ENCODE measurements at regions of chr3 and their contacts with region 1.

Region 1: GRCh38 chr3:169744366-169745054 is 20.4 kb downstream of the TERC start:
- DNase-seq: no peak
- ATAC-seq: peak in 2 of 8 donors; percentile 39 to 52
- H3K4me3 ChIP-seq: no peak overlapping the region
- H3K27ac ChIP-seq: no peak overlapping the region
- H3K4me1 ChIP-seq: peaks cover 0 to 3% (median 0%) of the 10 kb centered on the region in 9 donors
- H3K27me3 ChIP-seq: peaks cover 0 to 26% (median 5%) of the 10 kb centered on the region in 7 donors
- CTCF ChIP-seq: peak; percentile 12 to 72 (median 52)

Region 2: GRCh38 chr3:168952551-168952950 is 792.0 kb before region 1 on chr3:
- intact Hi-C with region 1: loop called in 2 of 10 experiments (anchors 10 kb)
- DNase-seq: no peak
- ATAC-seq: no peak
- H3K4me3 ChIP-seq: no peak overlapping the region
- H3K27ac ChIP-seq: no peak overlapping the region
- H3K4me1 ChIP-seq: no peaks in the 10 kb centered on the region
- H3K27me3 ChIP-seq: no peaks in the 10 kb centered on the region
- CTCF ChIP-seq: peak in 6 of 9 donors; percentile 20 to 45 (median 30)

Region 3: DNA sequence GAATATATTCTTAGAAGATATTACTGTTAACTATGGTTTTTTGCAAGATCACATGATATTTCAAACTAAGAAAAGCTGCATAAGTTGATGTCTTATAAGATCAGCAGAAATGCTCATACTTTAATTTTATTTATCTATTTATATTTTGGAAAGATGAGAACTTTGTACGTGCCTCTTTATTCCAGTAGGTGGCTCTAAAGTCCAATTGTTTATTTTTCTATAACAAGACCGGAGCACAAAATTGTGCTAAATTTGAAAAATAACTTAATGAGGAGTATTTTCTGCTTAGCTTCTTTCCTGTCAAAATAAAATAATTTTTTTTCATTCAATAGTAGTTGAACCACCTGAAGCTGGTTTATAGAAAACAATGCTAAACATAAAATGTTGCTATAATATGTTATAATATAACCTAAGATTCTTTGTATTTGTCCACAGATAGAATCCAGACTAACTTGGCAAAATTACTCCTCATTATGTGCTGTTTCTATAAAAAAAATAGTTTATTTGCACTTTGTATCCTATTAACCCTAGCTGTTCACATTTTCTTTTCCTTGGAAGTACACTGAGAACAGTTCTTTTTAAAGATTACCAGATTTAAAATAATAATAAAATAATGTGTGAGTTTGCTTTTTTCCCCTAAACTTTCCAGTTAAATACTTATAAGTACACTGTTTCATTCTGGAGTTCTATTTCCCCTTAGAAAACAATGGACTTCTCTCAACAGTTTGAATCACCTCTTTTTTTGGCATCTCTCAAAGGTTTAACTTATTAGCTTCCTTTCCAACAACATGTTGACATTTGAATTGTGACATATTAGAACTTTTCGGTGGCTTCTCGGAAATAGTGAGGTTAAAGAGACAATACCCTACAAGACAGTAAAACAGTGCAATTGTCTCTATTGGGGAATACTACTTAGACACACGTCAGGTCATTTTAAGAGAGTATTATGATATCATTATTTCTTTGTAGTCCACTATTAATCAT is 611.0 kb before region 1 on chr3:
- intact Hi-C with region 1: loop called in 4 of 10 experiments (anchors 5 to 10 kb)
- DNase-seq: no peak
- ATAC-seq: peak in 7 of 8 donors; percentile 33 to 83 (median 74)
- H3K4me3 ChIP-seq: peak overlapping the region in 2 of 10 donors; percentile 9 to 22
- H3K27ac ChIP-seq: peak overlapping the region in 7 of 10 donors; percentile 32 to 93 (median 59)
- H3K4me1 ChIP-seq: peaks cover 0 to 68% (median 7%) of the 10 kb centered on the region in 9 donors
- H3K27me3 ChIP-seq: peaks cover 0 to 18% (median 4%) of the 10 kb centered on the region in 7 donors
- CTCF ChIP-seq: peak; percentile 12 to 66 (median 48)

Region 4: GRCh38 chr3:169836078-169836941 is 91.8 kb after region 1 on chr3:
- intact Hi-C with region 1: no loop called
- DNase-seq: no peak
- ATAC-seq: no peak
- H3K4me3 ChIP-seq: no peak overlapping the region
- H3K27ac ChIP-seq: no peak overlapping the region
- H3K4me1 ChIP-seq: no peaks in the 10 kb centered on the region
- H3K27me3 ChIP-seq: peaks cover 0 to 4% (median 0%) of the 10 kb centered on the region in 7 donors
- CTCF ChIP-seq: no peak